Activated naive CD4-positive, alpha-beta T cell treated with anti-CD3 and anti-CD28 coated beads for 36 hours (primary cell): ENCODE measurements at regions of chr18 and their contacts with region 1.

Region 1: DNA sequence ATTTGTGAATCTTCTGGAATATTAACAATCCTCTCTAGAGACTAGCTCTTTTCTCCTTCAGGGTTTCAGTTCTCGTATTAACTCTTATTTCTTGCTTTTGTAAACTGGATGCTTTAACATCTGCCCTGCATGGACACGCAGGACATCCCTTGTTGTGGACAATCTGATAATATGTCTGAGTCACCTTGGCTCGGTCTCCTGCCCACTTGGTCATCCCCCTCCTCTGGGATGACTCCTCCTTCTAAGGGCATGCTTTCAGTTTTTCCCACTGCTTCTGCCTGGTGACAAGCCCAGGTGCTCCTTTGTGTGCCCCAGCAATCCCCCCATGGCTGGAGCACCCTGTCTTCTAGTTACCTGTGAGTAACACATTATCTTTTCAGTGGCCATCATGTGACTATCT is 460.5 kb downstream of the DSC3 start:
- DNase-seq: no peak
- H3K4me3 Mint-ChIP-seq: no peak overlapping the region
- H3K27ac Mint-ChIP-seq: no peak overlapping the region
- H3K4me1 Mint-ChIP-seq: no peaks in the 10 kb centered on the region
- H3K27me3 Mint-ChIP-seq: no peaks in the 10 kb centered on the region

Region 2: DNA sequence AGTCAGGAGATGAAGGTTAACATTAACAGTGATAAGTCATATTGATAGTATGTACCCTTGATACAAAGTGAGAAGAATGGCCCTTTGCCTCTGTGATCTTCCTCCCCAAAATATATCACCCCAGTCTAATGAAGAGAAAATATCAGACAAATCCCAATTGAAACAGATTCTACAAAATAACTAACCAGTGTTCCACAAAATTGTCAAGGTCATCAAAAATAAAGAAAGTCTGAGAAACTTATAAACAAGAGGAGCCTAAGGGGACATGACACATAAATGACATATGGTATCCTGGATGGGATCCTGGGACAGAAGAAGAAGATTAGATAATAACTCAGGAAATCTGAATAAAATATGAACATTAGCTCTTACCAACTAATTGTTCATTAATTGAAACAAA is 62.1 kb after region 1 on chr18:
- CTCF ChIA-PET with region 1: no interaction called
- intact Hi-C with region 1: loop called (anchors 10 kb)
- DNase-seq: no peak
- H3K4me3 Mint-ChIP-seq: no peak overlapping the region
- H3K27ac Mint-ChIP-seq: no peak overlapping the region
- H3K4me1 Mint-ChIP-seq: no peaks in the 10 kb centered on the region
- H3K27me3 Mint-ChIP-seq: no peaks in the 10 kb centered on the region

Region 3: GRCh38 chr18:31190919-31191318 is 608.8 kb after region 1 on chr18:
- CTCF ChIA-PET with region 1: no interaction called
- intact Hi-C with region 1: no loop called
- DNase-seq: no peak
- H3K4me3 Mint-ChIP-seq: no peak overlapping the region
- H3K27ac Mint-ChIP-seq: no peak overlapping the region
- H3K4me1 Mint-ChIP-seq: peaks cover 3% of the 10 kb centered on the region
- H3K27me3 Mint-ChIP-seq: no peaks in the 10 kb centered on the region